Head of caudate nucleus (tissue), 42 donors: ENCODE measurements at regions of chr6 and their contacts with region 1.

Region 1: GRCh38 chr6:33299237-33299944 is 649 bp upstream of the RGL2 start:
- DNase-seq: peak; percentile 77 to 97 (median 92)

Region 2: DNA sequence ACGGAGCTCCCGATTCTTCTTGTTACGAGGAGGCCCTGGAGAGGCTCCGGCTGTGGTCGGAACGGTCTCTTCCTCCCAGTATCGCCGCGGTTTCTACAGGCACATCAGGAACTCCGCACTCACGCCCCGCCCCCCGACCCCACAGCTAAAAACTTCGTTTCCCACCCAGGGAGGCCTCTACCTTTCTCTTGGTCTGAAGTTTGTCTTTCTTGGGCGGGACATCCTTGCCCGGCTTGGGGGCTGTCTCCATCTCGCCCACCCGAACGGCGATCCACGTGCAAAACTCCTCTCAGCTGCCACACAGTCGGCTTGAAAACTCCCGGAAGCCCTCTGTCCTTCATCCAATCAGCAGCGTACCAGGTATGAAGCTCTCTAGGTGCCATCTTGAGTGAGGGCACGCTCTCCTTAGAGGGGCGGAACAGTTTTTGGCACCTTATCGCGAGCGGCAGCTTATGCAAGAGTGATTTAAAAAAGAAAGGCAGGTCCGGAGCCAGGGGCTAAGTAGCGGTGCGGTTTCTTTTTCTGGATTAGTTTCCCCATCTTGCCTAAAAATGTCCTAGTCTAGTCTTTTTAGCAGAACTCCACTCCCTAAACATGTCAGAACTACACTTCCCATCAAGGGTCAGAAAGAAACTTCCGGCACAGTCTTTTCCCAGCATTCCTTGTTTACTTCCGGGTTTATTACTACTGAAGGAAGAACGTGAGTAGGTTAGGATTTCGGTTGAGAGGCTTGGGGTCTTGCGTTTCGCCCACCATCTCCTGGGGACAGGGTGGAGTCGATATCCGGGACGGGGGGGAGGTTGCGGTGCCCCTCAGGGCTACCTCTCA is 10.3 kb before region 1 on chr6 and contains the starts of genes PFDN6 and WDR46:
- intact Hi-C with region 1: loop called (anchors 1 kb)
- DNase-seq: peak; percentile 71 to 96 (median 90)

Region 3: DNA sequence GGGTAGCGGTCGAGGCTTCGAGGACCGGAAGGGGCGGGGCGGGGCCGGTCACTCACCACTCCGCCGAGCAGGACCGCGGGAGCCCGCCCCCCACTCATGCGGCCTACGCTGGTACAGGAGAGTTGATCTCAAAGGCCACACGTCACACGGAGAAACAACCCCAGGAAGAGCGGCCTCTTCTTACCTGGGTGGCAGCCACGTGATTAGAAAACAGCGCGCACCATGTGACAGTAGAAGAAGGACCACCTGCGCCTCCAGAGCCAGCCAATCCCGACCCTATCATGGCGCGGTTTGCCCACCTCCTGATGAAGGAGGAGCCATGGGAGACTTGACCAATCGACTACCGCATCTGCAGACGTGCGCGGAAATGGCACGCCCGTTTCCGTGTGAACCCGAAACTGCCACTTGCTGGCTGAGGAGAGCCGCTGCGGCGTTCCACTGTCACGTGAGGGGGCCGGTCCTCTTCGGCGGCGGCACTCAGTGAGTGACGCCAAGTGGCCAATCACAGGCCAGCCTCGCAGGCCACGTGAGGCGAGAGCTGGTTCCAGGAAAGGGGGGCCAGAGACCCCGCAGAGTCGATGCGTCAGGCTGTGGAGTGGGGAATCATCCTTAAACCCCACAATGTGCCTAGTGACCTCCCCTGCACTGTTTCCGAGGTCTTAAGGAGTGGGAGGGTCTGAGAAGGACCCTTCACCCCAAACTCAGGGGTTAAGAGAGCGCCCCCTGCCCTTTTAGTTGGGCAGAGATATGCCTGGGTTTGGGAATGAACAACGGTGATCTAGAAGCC is 118.7 kb after region 1 on chr6 and contains the start of gene CUTA:
- intact Hi-C with region 1: loop called (anchors 10 kb)
- DNase-seq: peak; percentile 99 to 100 (median 100)